Right ventricle myocardium inferior (tissue), 1 donor: ENCODE measurements at regions of chr18 and their contacts with region 1.

Region 1: DNA sequence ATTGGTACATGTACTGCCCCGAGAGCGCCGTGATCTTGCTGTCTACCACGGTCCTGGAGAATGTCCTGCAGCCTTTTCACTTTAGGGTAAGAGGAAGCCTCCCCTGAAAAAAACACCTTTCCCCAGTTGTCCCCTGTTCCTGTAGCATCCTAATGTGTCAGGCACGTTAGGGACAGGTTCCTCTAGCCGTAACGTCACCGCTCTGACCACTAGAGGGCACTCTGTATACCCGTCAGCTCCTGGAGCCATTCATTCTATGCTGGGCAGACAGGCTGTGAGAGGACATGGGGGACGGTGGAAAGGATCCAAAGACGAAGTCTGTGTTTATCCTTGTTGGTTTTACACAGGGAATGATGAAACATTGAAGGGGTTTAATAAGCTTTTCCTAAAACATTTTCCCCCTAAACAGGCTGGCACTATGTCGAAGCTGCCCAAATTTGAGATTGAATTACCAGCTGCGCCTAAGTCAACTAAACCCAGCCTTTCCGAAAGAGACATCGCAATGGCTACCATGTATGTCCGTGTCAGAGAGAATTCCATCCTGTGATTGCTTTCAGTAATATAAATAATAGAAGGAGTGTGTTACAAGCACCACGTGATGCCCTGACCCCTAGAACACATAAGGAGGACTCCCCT is 12.7 kb downstream of the RMC1 start:
- DNase-seq: no peak
- ATAC-seq: peak; percentile 92

Region 2: DNA sequence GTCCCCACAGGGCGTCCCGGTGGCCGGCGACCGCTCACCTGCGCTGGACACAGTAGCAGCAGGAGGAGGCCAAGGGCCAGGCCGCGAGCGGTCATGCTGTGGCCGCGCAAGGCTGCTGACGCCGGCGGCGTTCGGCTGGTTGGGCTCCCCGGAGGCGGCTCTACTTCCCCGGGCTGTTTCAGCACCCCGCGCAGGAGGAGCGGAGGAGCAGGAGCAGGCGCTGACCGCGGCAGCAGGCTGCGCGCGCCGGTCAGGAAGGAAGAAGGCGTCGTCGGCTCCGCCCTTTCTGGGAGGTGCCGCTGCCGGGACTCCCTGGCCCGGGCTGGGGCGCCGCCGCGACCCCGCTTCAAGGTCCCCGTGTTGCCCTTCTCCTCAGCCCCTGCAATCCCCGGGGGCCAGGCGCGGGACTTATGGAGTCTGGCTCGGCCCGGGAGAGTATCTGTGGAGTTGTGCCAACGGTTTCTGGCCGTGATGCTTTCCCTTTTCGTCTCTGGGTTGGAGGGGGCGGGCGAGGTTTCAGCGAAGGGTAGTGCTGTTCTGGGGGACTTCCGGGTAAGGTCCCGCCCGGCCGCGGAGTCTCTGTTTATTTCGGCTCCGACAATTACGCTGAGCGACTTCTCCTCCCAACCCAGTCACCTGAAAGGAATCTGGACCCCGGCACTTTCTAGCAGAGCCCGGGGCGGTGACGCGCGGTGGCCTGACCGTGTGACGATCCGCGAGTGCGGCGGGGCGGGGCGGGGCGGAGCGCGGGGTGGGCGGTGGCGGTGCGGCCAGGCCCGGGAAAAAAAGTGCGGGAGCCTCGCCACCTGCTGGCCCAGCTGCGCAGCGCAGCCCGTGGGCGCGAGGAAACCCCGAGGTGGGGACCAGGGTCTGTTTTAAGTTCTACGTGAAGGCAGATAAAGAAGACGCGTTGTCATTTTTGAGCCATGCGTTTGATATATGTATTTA is 70.5 kb after region 1 on chr18 and contains the start of gene NPC1:
- intact Hi-C with region 1: loop called (anchors 1 kb)
- DNase-seq: peak; percentile 97
- ATAC-seq: peak; percentile 98
- total RNA-seq, gene NPC1: 10.9 TPM

Region 3: DNA sequence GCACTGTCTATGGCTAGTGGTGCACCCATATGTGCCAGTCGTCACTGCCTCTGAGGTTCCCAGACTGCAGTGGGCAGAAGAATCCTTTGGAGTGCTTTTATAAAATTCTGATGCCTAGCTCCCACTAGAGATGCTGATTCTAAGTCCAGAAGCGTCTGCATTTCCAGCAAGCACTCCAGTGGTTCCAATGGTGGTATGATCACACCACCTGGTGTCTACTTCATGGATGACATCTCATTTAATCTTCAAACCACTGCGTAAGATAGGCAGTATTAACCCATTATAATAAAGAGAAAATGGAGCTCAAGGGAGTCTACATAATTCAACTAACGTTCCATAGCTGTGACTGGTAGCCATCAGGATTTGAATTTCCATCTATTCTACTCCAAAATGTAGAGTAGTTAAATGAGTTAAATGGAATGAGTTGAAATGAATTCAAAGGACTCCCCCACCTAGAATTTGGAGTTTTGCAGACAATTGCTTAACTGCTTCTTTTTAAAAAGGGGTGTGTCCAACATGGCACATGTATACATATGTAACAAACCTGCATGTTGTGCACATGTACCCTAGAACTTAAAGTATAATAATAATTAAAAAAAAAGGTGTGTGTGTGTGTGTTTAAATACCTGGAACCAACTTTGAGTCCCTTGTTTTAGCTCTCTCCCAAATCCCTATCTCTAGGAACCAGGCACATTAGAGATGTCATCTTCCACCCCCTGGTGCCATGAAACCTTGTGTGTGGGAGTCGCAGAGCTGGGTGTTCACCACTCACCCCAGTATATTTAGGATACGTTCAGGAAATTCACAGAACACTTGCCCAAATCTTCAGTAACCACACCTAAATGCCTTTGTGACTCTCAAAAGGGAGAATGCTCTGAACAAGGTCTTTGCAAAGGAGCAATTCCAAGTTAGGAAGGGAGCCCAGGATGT is 187.3 kb after region 1 on chr18:
- intact Hi-C with region 1: loop called (anchors 10 kb)
- DNase-seq: no peak
- ATAC-seq: no peak